Heart left ventricle (tissue), 16 donors: ENCODE measurements at regions of chr10 and their contacts with region 1.

Region 1: GRCh38 chr10:124741281-124741921 is 2.8 kb downstream of the FAM53B start:
- DNase-seq: peak; percentile 85 to 90 (median 87)
- ATAC-seq: peak; percentile 57 to 77 (median 68)
- H3K4me3 ChIP-seq: peak overlapping the region in 9 of 12 donors; percentile 64 to 89 (median 78)
- H3K27ac ChIP-seq: peak overlapping the region; percentile 58 to 95 (median 84)
- H3K4me1 ChIP-seq: peaks cover 36 to 80% (median 69%) of the 10 kb centered on the region in 12 donors
- H3K27me3 ChIP-seq: no peaks in the 10 kb centered on the region
- CTCF ChIP-seq: peak; percentile 73 to 95 (median 92)
- POLR2A ChIP-seq: peak in 1 of 2 donors; percentile 12

Region 2: DNA sequence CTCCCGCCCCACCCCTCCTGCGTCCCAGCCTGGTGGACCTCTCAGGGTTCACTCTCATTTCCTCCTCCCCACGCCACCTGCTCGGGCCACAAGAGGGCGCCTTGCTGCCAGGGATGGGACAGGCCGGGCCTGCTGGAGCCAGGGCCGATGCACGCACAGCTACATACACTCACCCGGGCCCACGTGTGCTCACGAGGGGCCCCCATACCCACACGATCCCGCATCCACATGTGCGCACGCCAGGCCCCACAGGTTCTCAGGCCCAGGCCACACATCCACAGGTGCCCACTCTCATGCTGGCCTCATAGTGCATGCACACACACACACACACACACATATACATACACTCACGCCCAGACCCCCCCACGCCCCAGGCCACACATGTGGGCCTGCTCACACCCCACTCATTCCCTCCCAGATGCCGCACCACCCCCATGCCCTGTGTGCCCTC is 211.2 kb before region 1 on chr10:
- intact Hi-C with region 1: loop called in 5 of 10 experiments (anchors 2 to 5 kb)
- DNase-seq: peak; percentile 84 to 94 (median 88)
- ATAC-seq: peak; percentile 68 to 87 (median 84)
- H3K4me3 ChIP-seq: no peak overlapping the region
- H3K27ac ChIP-seq: no peak overlapping the region
- H3K4me1 ChIP-seq: peaks cover 0 to 18% (median 5%) of the 10 kb centered on the region in 12 donors
- H3K27me3 ChIP-seq: no peaks in the 10 kb centered on the region
- CTCF ChIP-seq: peak; percentile 82 to 91 (median 87)
- POLR2A ChIP-seq: no peak

Region 3: GRCh38 chr10:124619195-124619594 is 122.2 kb before region 1 on chr10:
- intact Hi-C with region 1: loop called in 1 of 10 experiments (anchors 2 kb)
- DNase-seq: no peak
- ATAC-seq: no peak
- H3K4me3 ChIP-seq: no peak overlapping the region
- H3K27ac ChIP-seq: no peak overlapping the region
- H3K4me1 ChIP-seq: peaks cover 0 to 71% (median 32%) of the 10 kb centered on the region in 12 donors
- H3K27me3 ChIP-seq: no peaks in the 10 kb centered on the region
- CTCF ChIP-seq: no peak
- POLR2A ChIP-seq: no peak

Region 4: GRCh38 chr10:124632064-124632531 is 109.3 kb before region 1 on chr10:
- intact Hi-C with region 1: loop called in 9 of 10 experiments (anchors 1 to 5 kb)
- DNase-seq: peak; percentile 53 to 83 (median 67)
- ATAC-seq: peak; percentile 68 to 84 (median 82)
- H3K4me3 ChIP-seq: no peak overlapping the region
- H3K27ac ChIP-seq: peak overlapping the region; percentile 2 to 77 (median 59)
- H3K4me1 ChIP-seq: peaks cover 7 to 78% (median 64%) of the 10 kb centered on the region in 12 donors
- H3K27me3 ChIP-seq: no peaks in the 10 kb centered on the region
- CTCF ChIP-seq: peak; percentile 41 to 72 (median 51)
- POLR2A ChIP-seq: no peak

Region 5: DNA sequence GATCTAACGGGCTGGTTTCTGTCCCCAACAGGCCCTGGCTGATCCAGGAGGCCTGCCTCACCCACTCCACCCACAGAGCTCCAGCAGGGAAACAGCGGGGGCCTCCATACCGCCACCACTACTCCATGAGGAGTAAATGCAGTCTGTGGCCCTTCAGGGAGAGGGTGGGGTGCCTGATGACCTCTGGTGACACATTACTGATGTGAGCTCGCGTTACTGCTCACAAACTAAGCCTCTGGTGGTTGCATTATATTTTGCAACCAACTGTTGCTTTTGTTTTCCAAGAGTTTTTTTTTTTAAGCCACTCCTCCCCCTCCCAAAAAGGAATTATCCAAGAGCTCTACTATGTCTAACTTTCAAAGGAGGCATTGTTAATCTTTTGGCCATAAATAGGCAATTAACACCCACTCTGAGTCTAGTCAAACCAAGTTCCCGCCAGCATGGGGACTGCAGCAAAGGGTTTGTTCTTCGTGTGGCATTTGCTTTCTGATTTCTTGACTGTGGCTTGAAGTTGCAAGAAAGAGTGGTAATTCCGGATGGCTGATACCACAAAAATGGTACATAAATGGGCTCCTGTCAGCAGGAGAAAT is 69.8 kb before region 1 on chr10:
- intact Hi-C with region 1: loop called in 1 of 10 experiments (anchors 2 kb)
- DNase-seq: peak in 4 of 5 donors; percentile 53 to 81 (median 72)
- ATAC-seq: peak in 3 of 4 donors; percentile 54 to 61 (median 60)
- H3K4me3 ChIP-seq: no peak overlapping the region
- H3K27ac ChIP-seq: peak overlapping the region; percentile 18 to 86 (median 66)
- H3K4me1 ChIP-seq: peaks cover 37 to 100% (median 94%) of the 10 kb centered on the region in 12 donors
- H3K27me3 ChIP-seq: no peaks in the 10 kb centered on the region
- CTCF ChIP-seq: peak; percentile 13 to 62 (median 38)
- POLR2A ChIP-seq: no peak

Region 6: DNA sequence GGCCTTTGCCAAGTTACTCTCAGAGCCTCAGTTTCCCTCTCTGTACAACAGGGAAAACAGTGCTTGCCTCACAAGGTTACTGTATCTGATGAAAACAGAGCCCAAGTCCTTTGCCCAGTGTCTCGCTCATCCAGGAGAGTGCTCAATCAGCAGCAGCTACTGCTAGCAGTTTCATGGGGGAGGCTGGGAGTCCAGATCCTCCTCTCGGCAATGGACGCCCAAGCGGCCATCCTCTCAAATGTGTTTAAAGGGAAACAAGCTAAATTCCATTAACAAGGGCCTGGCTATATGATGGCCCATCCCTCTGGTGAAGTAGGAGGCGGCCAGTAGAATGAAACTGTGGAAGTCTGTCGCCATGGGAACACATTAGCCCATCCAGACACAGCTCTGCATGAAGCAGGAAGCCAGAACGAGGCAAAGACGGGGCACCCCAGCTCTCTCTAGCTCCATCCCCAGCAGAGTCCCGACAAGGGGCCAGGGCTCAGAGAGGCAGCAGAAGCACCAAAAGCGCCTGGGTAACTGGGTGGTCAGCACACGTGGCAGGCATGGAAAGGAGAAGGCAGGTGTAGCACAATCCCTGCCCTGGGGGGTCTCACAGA is 32.4 kb before region 1 on chr10:
- intact Hi-C with region 1: loop called in 7 of 10 experiments (anchors 2 to 5 kb)
- DNase-seq: no peak
- ATAC-seq: no peak
- H3K4me3 ChIP-seq: no peak overlapping the region
- H3K27ac ChIP-seq: peak overlapping the region in 11 of 12 donors; percentile 25 to 97 (median 89)
- H3K4me1 ChIP-seq: peaks cover 24 to 99% (median 84%) of the 10 kb centered on the region in 12 donors
- H3K27me3 ChIP-seq: no peaks in the 10 kb centered on the region
- CTCF ChIP-seq: no peak
- POLR2A ChIP-seq: no peak

Region 7: GRCh38 chr10:125174360-125174759 is 433.0 kb after region 1 on chr10:
- intact Hi-C with region 1: no loop called
- DNase-seq: no peak
- ATAC-seq: no peak
- H3K4me3 ChIP-seq: no peak overlapping the region
- H3K27ac ChIP-seq: no peak overlapping the region
- H3K4me1 ChIP-seq: no peaks in the 10 kb centered on the region
- H3K27me3 ChIP-seq: peaks cover 0 to 15% (median 0%) of the 10 kb centered on the region in 9 donors
- CTCF ChIP-seq: no peak
- POLR2A ChIP-seq: no peak